ENCODE measurements at regions of chr6 and their contacts with region 1.

Region 1: GRCh38 chr6:72622094-72622940 is 453 bp downstream of the KCNQ5 start:
- DNase-seq: peak; percentile 80
- H3K4me3 ChIP-seq: peak overlapping the region; percentile 73
- H3K27ac ChIP-seq: peak overlapping the region; percentile 66
- H3K4me1 ChIP-seq: peaks cover 30% of the 10 kb centered on the region
- H3K27me3 ChIP-seq: no peaks in the 10 kb centered on the region
- CTCF ChIP-seq: peak; percentile 27; the same call in 1 of the 2 replicates

Region 2: GRCh38 chr6:72418495-72418894 is 203.8 kb before region 1 on chr6:
- CTCF ChIA-PET with region 1: no interaction called
- POLR2A ChIA-PET with region 1: interaction called, 4 read pairs
- intact Hi-C with region 1: loop called (anchors 5 kb)
- DNase-seq: peak; percentile 64
- H3K4me3 ChIP-seq: no peak overlapping the region
- H3K27ac ChIP-seq: no peak overlapping the region
- H3K4me1 ChIP-seq: peaks cover 46% of the 10 kb centered on the region
- H3K27me3 ChIP-seq: no peaks in the 10 kb centered on the region
- CTCF ChIP-seq: no peak

Region 3: GRCh38 chr6:72861935-72862432 is 239.7 kb after region 1 on chr6:
- CTCF ChIA-PET with region 1: no interaction called
- POLR2A ChIA-PET with region 1: no interaction called
- intact Hi-C with region 1: loop called (anchors 10 kb)
- DNase-seq: peak; percentile 80
- H3K4me3 ChIP-seq: no peak overlapping the region
- H3K27ac ChIP-seq: peak overlapping the region; percentile 12
- H3K4me1 ChIP-seq: peaks cover 51% of the 10 kb centered on the region
- H3K27me3 ChIP-seq: no peaks in the 10 kb centered on the region
- CTCF ChIP-seq: no peak

Region 4: DNA sequence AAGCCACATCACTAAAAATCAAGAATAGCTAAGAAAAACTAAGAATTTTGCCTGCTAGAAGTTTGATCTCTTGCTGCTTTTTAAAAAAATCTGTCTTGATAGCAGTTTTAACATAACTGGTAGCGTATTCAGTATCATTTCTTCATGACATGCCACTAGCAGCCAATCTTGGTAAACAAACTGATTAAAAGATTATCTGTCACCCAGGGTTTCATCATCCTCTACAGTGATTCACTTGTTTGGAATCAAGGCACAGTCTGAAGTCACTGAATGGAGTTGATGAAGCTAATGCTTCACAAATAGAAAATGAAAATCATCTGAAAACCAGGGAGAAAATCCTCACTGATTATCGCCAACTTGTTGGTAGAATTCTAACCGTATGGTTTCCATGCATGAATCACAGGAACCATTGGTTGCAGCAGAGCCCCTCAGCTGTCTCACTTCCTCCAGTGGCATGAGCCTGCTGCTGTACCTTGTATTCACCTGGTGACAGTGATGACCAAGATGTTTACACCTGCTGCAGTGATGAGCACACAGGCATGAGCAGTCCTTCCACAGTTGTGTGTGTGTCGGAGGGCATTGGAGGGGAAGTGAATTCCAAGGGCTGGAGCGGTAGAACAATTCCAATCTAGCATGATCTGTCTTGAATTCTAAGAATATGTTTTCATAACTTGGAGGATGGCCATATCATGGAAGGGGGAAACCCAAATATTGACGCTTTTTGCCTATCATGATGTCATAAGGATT is 328.0 kb after region 1 on chr6:
- CTCF ChIA-PET with region 1: no interaction called
- POLR2A ChIA-PET with region 1: no interaction called
- intact Hi-C with region 1: loop called (anchors 5 kb)
- DNase-seq: peak; percentile 83
- H3K4me3 ChIP-seq: no peak overlapping the region
- H3K27ac ChIP-seq: peak overlapping the region; percentile 72
- H3K4me1 ChIP-seq: peaks cover 55% of the 10 kb centered on the region
- H3K27me3 ChIP-seq: no peaks in the 10 kb centered on the region
- CTCF ChIP-seq: no peak

Region 5: GRCh38 chr6:73050706-73051105 is 428.4 kb after region 1 on chr6:
- CTCF ChIA-PET with region 1: no interaction called
- POLR2A ChIA-PET with region 1: no interaction called
- intact Hi-C with region 1: loop called (anchors 2 kb)
- DNase-seq: peak; percentile 60
- H3K4me3 ChIP-seq: no peak overlapping the region
- H3K27ac ChIP-seq: peak overlapping the region; percentile 77
- H3K4me1 ChIP-seq: peaks cover 33% of the 10 kb centered on the region
- H3K27me3 ChIP-seq: no peaks in the 10 kb centered on the region
- CTCF ChIP-seq: no peak